ENCODE measurements at regions of chr6 and their contacts with region 1.

Region 1: GRCh38 chr6:27893059-27893835 is 18.9 kb downstream of the OR2B2 start:
- DNase-seq: peak; percentile 91 to 94 (median 93)
- H3K4me3 ChIP-seq: peak overlapping the region; percentile 72 to 86
- H3K4me3 Mint-ChIP-seq: no peak overlapping the region
- H3K27ac ChIP-seq: peak overlapping the region; percentile 80
- H3K27ac Mint-ChIP-seq: no peak overlapping the region
- H3K4me1 ChIP-seq: peaks cover 30% of the 10 kb centered on the region
- H3K4me1 Mint-ChIP-seq: peaks cover 15 to 40% (median 28%) of the 10 kb centered on the region in 4 donors
- H3K27me3 ChIP-seq: no peaks in the 10 kb centered on the region
- H3K27me3 Mint-ChIP-seq: no peaks in the 10 kb centered on the region

Region 2: GRCh38 chr6:26045065-26045927 is 1848.0 kb before region 1 on chr6:
- CTCF ChIA-PET with region 1: no interaction called
- POLR2A ChIA-PET with region 1: interaction called, 11 read pairs
- intact Hi-C with region 1: no loop called
- DNase-seq: peak; percentile 88 to 91 (median 90)
- H3K4me3 ChIP-seq: peak overlapping the region; percentile 72 to 74
- H3K4me3 Mint-ChIP-seq: peak overlapping the region; percentile 88 to 98 (median 94)
- H3K27ac ChIP-seq: peak overlapping the region; percentile 76
- H3K27ac Mint-ChIP-seq: peak overlapping the region; percentile 93 to 99 (median 98)
- H3K4me1 ChIP-seq: peaks cover 14% of the 10 kb centered on the region
- H3K4me1 Mint-ChIP-seq: peaks cover 12 to 28% (median 20%) of the 10 kb centered on the region in 4 donors
- H3K27me3 ChIP-seq: no peaks in the 10 kb centered on the region
- H3K27me3 Mint-ChIP-seq: no peaks in the 10 kb centered on the region

Region 3: GRCh38 chr6:26270903-26271667 is 1622.2 kb before region 1 on chr6:
- CTCF ChIA-PET with region 1: no interaction called
- POLR2A ChIA-PET with region 1: interaction called, 13 read pairs
- intact Hi-C with region 1: no loop called
- DNase-seq: peak; percentile 84 to 87 (median 85)
- H3K4me3 ChIP-seq: peak overlapping the region; percentile 53 to 65
- H3K4me3 Mint-ChIP-seq: peak overlapping the region in 1 of 8 donors; percentile 85
- H3K27ac ChIP-seq: peak overlapping the region; percentile 83
- H3K27ac Mint-ChIP-seq: peak overlapping the region in 5 of 7 donors; percentile 68 to 97 (median 82)
- H3K4me1 ChIP-seq: peaks cover 31% of the 10 kb centered on the region
- H3K4me1 Mint-ChIP-seq: peaks cover 0 to 22% (median 15%) of the 10 kb centered on the region in 4 donors
- H3K27me3 ChIP-seq: no peaks in the 10 kb centered on the region
- H3K27me3 Mint-ChIP-seq: no peaks in the 10 kb centered on the region

Region 4: DNA sequence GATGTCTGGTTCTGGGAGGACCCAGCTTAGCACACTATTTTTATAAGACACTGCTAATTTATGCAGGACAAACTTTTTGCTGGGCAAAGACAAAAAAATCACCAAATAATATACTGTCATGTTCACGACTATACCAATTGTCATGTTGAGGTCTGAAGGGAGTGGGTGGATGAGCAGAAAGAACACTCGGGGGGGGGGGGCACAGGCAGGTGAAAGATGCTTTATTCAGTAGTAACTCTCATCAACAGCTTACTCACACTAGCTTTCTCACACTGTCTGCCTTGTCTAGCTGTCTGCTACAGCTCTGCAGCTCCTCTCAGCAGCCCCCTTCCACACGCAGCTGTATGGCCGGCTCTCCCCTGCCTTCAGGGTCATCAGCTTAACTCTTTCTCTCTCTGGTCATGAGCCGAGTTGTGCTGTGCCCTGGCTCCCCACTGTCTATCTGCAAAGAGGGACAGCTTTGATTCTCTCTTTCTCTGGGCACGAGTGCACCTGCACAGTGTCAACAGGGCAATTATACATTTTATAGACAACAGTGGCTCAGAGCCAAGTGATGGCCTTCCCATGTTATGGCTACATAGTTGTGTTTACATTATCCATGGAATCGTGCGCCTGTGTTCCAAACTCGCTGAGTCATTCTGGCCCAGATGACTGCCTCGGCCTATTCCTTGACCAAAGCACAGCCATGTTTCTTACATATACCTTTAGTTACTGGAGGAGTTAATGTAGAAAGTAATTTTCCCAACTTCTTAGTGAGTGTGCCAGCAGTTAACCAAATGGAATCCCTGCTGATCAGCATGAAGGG is 833.4 kb before region 1 on chr6:
- CTCF ChIA-PET with region 1: no interaction called
- POLR2A ChIA-PET with region 1: no interaction called
- intact Hi-C with region 1: no loop called
- DNase-seq: no peak
- H3K4me3 ChIP-seq: no peak overlapping the region
- H3K4me3 Mint-ChIP-seq: no peak overlapping the region
- H3K27ac ChIP-seq: no peak overlapping the region
- H3K27ac Mint-ChIP-seq: no peak overlapping the region
- H3K4me1 ChIP-seq: no peaks in the 10 kb centered on the region
- H3K4me1 Mint-ChIP-seq: no peaks in the 10 kb centered on the region
- H3K27me3 ChIP-seq: no peaks in the 10 kb centered on the region
- H3K27me3 Mint-ChIP-seq: peaks cover 9 to 21% of the 10 kb centered on the region in 2 donors

Region 5: GRCh38 chr6:27157459-27158315 is 735.6 kb before region 1 on chr6:
- CTCF ChIA-PET with region 1: interaction called, 60 read pairs
- POLR2A ChIA-PET with region 1: interaction called, 24 read pairs
- intact Hi-C with region 1: loop called (anchors 1 kb)
- DNase-seq: peak; percentile 78 to 92 (median 82)
- H3K4me3 ChIP-seq: peak overlapping the region; percentile 18 to 44
- H3K4me3 Mint-ChIP-seq: peak overlapping the region; percentile 81 to 91 (median 84)
- H3K27ac ChIP-seq: no peak overlapping the region
- H3K27ac Mint-ChIP-seq: peak overlapping the region; percentile 68 to 95 (median 85)
- H3K4me1 ChIP-seq: peaks cover 30% of the 10 kb centered on the region
- H3K4me1 Mint-ChIP-seq: peaks cover 21 to 46% (median 38%) of the 10 kb centered on the region in 4 donors
- H3K27me3 ChIP-seq: no peaks in the 10 kb centered on the region
- H3K27me3 Mint-ChIP-seq: peaks cover 0 to 4% of the 10 kb centered on the region in 2 donors

Region 6: GRCh38 chr6:27687154-27688013 is 205.9 kb before region 1 on chr6:
- CTCF ChIA-PET with region 1: no interaction called
- POLR2A ChIA-PET with region 1: interaction called, 8 read pairs
- intact Hi-C with region 1: loop called (anchors 5 kb)
- DNase-seq: peak; percentile 66 to 81 (median 71)
- H3K4me3 ChIP-seq: peak overlapping the region; percentile 98
- H3K4me3 Mint-ChIP-seq: peak overlapping the region; percentile 86 to 96 (median 92)
- H3K27ac ChIP-seq: peak overlapping the region; percentile 65
- H3K27ac Mint-ChIP-seq: peak overlapping the region; percentile 76 to 100 (median 94)
- H3K4me1 ChIP-seq: peaks cover 16% of the 10 kb centered on the region
- H3K4me1 Mint-ChIP-seq: peaks cover 16 to 26% (median 20%) of the 10 kb centered on the region in 4 donors
- H3K27me3 ChIP-seq: peaks cover under 1% of the 10 kb centered on the region
- H3K27me3 Mint-ChIP-seq: peaks cover 6 to 14% of the 10 kb centered on the region in 2 donors

Region 7: GRCh38 chr6:27825025-27825793 is 68.0 kb before region 1 on chr6:
- CTCF ChIA-PET with region 1: interaction called, 82 read pairs
- POLR2A ChIA-PET with region 1: interaction called, 459 read pairs
- intact Hi-C with region 1: no loop called
- DNase-seq: no peak
- H3K4me3 ChIP-seq: peak overlapping the region; percentile 62 to 79
- H3K4me3 Mint-ChIP-seq: peak overlapping the region; percentile 88 to 98 (median 92)
- H3K27ac ChIP-seq: peak overlapping the region; percentile 66
- H3K27ac Mint-ChIP-seq: peak overlapping the region; percentile 91 to 100 (median 98)
- H3K4me1 ChIP-seq: peaks cover 29% of the 10 kb centered on the region
- H3K4me1 Mint-ChIP-seq: peaks cover 16 to 43% (median 31%) of the 10 kb centered on the region in 4 donors
- H3K27me3 ChIP-seq: no peaks in the 10 kb centered on the region
- H3K27me3 Mint-ChIP-seq: no peaks in the 10 kb centered on the region

Region 8: GRCh38 chr6:27957516-27957915 is 64.3 kb after region 1 on chr6:
- CTCF ChIA-PET with region 1: no interaction called
- POLR2A ChIA-PET with region 1: no interaction called
- intact Hi-C with region 1: no loop called
- DNase-seq: no peak
- H3K4me3 ChIP-seq: no peak overlapping the region
- H3K4me3 Mint-ChIP-seq: no peak overlapping the region
- H3K27ac ChIP-seq: no peak overlapping the region
- H3K27ac Mint-ChIP-seq: no peak overlapping the region
- H3K4me1 ChIP-seq: no peaks in the 10 kb centered on the region
- H3K4me1 Mint-ChIP-seq: no peaks in the 10 kb centered on the region
- H3K27me3 ChIP-seq: no peaks in the 10 kb centered on the region
- H3K27me3 Mint-ChIP-seq: peaks cover 30 to 35% of the 10 kb centered on the region in 2 donors

Region 9: DNA sequence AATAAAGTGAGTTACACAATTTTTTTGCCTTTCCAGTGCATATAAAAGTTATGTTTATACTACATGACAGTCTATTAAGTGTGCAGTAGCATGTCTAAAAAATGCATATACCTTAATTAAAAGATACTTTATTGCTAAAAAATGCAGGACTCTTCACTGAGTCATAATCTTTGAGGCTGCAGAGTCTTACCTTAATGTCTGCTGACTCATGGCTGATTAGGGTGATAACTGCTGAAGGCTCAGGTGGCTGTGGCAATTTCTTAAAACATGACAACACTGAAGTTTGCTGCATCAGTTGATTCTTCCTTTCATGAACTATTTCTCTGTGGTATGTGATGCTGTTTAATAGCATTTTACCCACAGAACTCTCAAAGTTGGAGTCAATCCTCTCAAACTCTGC is 530.9 kb after region 1 on chr6:
- CTCF ChIA-PET with region 1: no interaction called
- POLR2A ChIA-PET with region 1: no interaction called
- intact Hi-C with region 1: no loop called
- DNase-seq: no peak
- H3K4me3 ChIP-seq: no peak overlapping the region
- H3K4me3 Mint-ChIP-seq: no peak overlapping the region
- H3K27ac ChIP-seq: no peak overlapping the region
- H3K27ac Mint-ChIP-seq: no peak overlapping the region
- H3K4me1 ChIP-seq: no peaks in the 10 kb centered on the region
- H3K4me1 Mint-ChIP-seq: peaks cover 7 to 8% (median 8%) of the 10 kb centered on the region in 4 donors
- H3K27me3 ChIP-seq: no peaks in the 10 kb centered on the region
- H3K27me3 Mint-ChIP-seq: peaks cover 8 to 19% of the 10 kb centered on the region in 2 donors

Region 10: GRCh38 chr6:28940858-28941680 is 1047.8 kb after region 1 on chr6:
- CTCF ChIA-PET with region 1: no interaction called
- POLR2A ChIA-PET with region 1: interaction called, 4 read pairs
- intact Hi-C with region 1: loop called (anchors 1 kb)
- DNase-seq: peak; percentile 85 to 88 (median 86)
- H3K4me3 ChIP-seq: peak overlapping the region; percentile 62 to 77
- H3K4me3 Mint-ChIP-seq: peak overlapping the region; percentile 87 to 98 (median 95)
- H3K27ac ChIP-seq: peak overlapping the region; percentile 39
- H3K27ac Mint-ChIP-seq: peak overlapping the region; percentile 85 to 97 (median 94)
- H3K4me1 ChIP-seq: peaks cover 35% of the 10 kb centered on the region
- H3K4me1 Mint-ChIP-seq: peaks cover 26 to 57% (median 46%) of the 10 kb centered on the region in 4 donors
- H3K27me3 ChIP-seq: no peaks in the 10 kb centered on the region
- H3K27me3 Mint-ChIP-seq: peaks cover 0 to 10% of the 10 kb centered on the region in 2 donors